ENCODE measurements at regions of chr3 and their contacts with region 1.

Region 1: GRCh38 chr3:58899159-58899952 is 150.5 kb downstream of the CFAP20DC start:
- DNase-seq: peak; percentile 80
- H3K4me3 Mint-ChIP-seq: no peak overlapping the region
- H3K27ac Mint-ChIP-seq: peak overlapping the region; percentile 12
- H3K4me1 Mint-ChIP-seq: peaks cover 22% of the 10 kb centered on the region
- H3K27me3 Mint-ChIP-seq: peaks cover 2% of the 10 kb centered on the region

Region 2: DNA sequence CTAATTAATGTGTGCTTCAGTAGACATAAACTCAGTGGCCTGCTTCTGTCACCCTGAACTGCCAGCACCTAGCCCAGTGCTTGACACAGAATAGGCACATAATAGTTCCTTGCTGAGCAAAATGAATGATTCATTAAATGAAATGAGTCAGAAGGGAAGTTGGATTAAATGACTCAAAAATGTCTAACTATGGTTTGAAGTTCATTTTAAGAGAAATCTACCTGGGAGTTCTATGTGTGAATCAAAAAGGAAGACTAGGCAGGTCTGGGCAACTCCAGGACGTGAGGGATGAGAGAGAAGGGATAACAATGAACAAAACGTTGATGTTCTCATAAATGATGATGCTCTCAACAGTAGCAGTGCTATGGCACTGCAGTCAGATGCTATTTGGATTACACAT is 24.6 kb before region 1 on chr3:
- intact Hi-C with region 1: loop called (anchors 1 kb)
- DNase-seq: no peak
- H3K4me3 Mint-ChIP-seq: peak overlapping the region; percentile 22
- H3K27ac Mint-ChIP-seq: peak overlapping the region; percentile 86
- H3K4me1 Mint-ChIP-seq: peaks cover 13% of the 10 kb centered on the region
- H3K27me3 Mint-ChIP-seq: peaks cover 11% of the 10 kb centered on the region

Region 3: GRCh38 chr3:58888087-58888486 is 11.3 kb before region 1 on chr3:
- intact Hi-C with region 1: no loop called
- DNase-seq: no peak
- H3K4me3 Mint-ChIP-seq: no peak overlapping the region
- H3K27ac Mint-ChIP-seq: no peak overlapping the region
- H3K4me1 Mint-ChIP-seq: no peaks in the 10 kb centered on the region
- H3K27me3 Mint-ChIP-seq: peaks cover 13% of the 10 kb centered on the region

Region 4: GRCh38 chr3:58924578-58924977 is 25.2 kb after region 1 on chr3:
- intact Hi-C with region 1: no loop called
- DNase-seq: no peak
- H3K4me3 Mint-ChIP-seq: no peak overlapping the region
- H3K27ac Mint-ChIP-seq: no peak overlapping the region
- H3K4me1 Mint-ChIP-seq: no peaks in the 10 kb centered on the region
- H3K27me3 Mint-ChIP-seq: peaks cover 1% of the 10 kb centered on the region